ENCODE measurements at regions of chr3 and their contacts with region 1.

Region 1: GRCh38 chr3:72398781-72399180 is 449.5 kb downstream of the SHQ1 start:
- DNase-seq: no peak
- ATAC-seq: no peak
- H3K4me3 ChIP-seq: no peak overlapping the region
- H3K27ac ChIP-seq: no peak overlapping the region
- H3K4me1 ChIP-seq: no peaks in the 10 kb centered on the region
- H3K27me3 ChIP-seq: no peaks in the 10 kb centered on the region
- CTCF ChIP-seq: no peak

Region 2: DNA sequence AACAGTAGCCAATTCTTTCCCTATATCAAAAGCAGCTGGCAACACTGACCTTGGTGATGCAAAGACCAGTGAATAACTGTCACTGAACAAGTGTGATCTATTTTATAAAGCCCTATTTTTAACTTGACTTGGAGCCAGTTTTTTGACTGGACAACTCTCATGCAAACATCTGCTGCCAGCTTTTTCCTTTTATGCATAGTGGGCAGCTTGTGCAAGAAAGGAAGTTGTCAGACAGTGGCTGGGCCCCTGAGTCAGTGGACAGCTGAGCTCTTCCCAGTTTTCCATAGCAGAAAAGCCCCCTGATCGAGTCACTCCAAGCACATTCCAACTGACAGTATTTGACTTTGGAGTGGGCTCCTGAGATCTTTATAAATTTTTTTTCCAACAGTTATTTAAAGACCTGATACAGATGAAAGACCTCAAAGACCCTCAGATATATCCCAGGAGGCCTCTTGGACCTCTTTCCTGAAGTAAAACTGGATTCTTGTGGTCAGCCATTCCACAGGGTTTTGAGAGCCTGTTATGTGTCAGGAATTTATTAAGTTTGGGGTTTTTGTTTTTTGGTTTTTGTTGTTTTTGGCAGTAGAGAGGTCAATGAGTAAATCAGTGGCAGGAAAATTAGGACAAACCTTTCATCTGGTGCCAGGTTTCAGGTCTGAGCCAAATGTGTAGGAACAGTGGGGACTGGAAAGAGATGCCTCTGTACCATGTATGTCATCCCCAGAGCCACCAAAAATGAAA is 1566.2 kb before region 1 on chr3:
- CTCF ChIA-PET with region 1: no interaction called
- POLR2A ChIA-PET with region 1: interaction called, 12 read pairs
- intact Hi-C with region 1: no loop called
- DNase-seq: peak; percentile 48
- ATAC-seq: peak; percentile 33; the same call in 1 of the 2 replicates
- H3K4me3 ChIP-seq: no peak overlapping the region
- H3K27ac ChIP-seq: no peak overlapping the region
- H3K4me1 ChIP-seq: peaks cover 11% of the 10 kb centered on the region; the same call in 1 of the 2 replicates
- H3K27me3 ChIP-seq: no peaks in the 10 kb centered on the region
- CTCF ChIP-seq: no peak

Region 3: GRCh38 chr3:71984843-71985613 is 413.8 kb before region 1 on chr3:
- CTCF ChIA-PET with region 1: no interaction called
- POLR2A ChIA-PET with region 1: no interaction called
- intact Hi-C with region 1: no loop called
- DNase-seq: no peak
- ATAC-seq: no peak
- H3K4me3 ChIP-seq: no peak overlapping the region
- H3K27ac ChIP-seq: no peak overlapping the region
- H3K4me1 ChIP-seq: peaks cover 11% of the 10 kb centered on the region
- H3K27me3 ChIP-seq: no peaks in the 10 kb centered on the region
- CTCF ChIP-seq: no peak

Region 4: DNA sequence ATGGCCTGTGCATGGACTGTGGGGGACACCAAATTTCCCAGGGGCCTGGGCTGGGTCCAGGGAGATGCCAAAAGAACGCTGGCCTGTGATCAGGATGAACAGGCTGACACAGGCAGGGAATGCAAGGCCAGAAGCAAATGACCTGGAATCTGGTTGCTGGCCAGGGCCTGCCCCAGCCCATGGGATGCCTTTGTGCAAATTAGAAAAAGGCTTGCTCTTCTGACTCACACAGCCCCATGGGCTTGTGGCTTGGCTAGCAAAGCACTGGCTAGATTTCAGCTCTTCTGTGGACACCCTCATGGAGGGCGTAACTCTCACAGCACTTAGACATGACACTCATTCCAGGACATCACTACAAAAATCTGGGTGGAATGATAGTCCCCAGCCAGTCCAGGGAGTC is 93.5 kb after region 1 on chr3:
- CTCF ChIA-PET with region 1: no interaction called
- POLR2A ChIA-PET with region 1: no interaction called
- intact Hi-C with region 1: no loop called
- DNase-seq: peak; percentile 94
- ATAC-seq: peak; percentile 84
- H3K4me3 ChIP-seq: no peak overlapping the region
- H3K27ac ChIP-seq: no peak overlapping the region
- H3K4me1 ChIP-seq: peaks cover 31% of the 10 kb centered on the region
- H3K27me3 ChIP-seq: no peaks in the 10 kb centered on the region
- CTCF ChIP-seq: no peak